Activated naive CD4-positive, alpha-beta T cell treated with anti-CD3 and anti-CD28 coated beads for 36 hours (primary cell): ENCODE measurements at regions of chr4 and their contacts with region 1.

Region 1: GRCh38 chr4:94349193-94349592 is 6.6 kb upstream of the HPGDS start:
- DNase-seq: no peak
- H3K4me3 Mint-ChIP-seq: no peak overlapping the region
- H3K27ac Mint-ChIP-seq: no peak overlapping the region
- H3K4me1 Mint-ChIP-seq: peaks cover 42% of the 10 kb centered on the region
- H3K27me3 Mint-ChIP-seq: peaks cover 18% of the 10 kb centered on the region

Region 2: GRCh38 chr4:94497690-94498089 is 148.5 kb after region 1 on chr4:
- CTCF ChIA-PET with region 1: no interaction called
- intact Hi-C with region 1: no loop called
- DNase-seq: no peak
- H3K4me3 Mint-ChIP-seq: no peak overlapping the region
- H3K27ac Mint-ChIP-seq: no peak overlapping the region
- H3K4me1 Mint-ChIP-seq: no peaks in the 10 kb centered on the region
- H3K27me3 Mint-ChIP-seq: no peaks in the 10 kb centered on the region

Region 3: DNA sequence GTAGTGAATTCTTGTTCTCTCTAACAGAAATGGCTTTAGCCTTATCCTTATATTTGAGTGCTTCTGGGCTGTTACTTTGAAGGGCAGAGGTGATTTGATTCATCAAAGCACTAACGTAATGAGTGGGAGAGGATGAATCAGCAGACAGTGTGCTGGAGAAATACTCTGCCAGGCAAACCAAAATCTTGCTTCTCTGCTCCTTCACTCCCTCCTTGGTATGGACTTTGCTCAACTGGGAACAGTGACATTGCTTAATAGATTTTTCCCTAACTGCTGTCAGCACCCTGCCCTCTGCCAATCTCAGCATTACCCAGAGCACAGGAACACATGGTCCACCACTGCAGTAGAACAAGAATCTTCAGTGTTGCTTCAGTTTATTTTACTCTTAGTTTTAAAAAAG is 158.5 kb after region 1 on chr4:
- CTCF ChIA-PET with region 1: no interaction called
- intact Hi-C with region 1: loop called (anchors 2 kb)
- DNase-seq: peak; percentile 18
- H3K4me3 Mint-ChIP-seq: no peak overlapping the region
- H3K27ac Mint-ChIP-seq: peak overlapping the region; percentile 26
- H3K4me1 Mint-ChIP-seq: peaks cover 13% of the 10 kb centered on the region
- H3K27me3 Mint-ChIP-seq: no peaks in the 10 kb centered on the region